Endothelial cell of umbilical vein (primary cell): ENCODE measurements at regions of chr17 and their contacts with region 1.

Region 1: GRCh38 chr17:81094509-81095382 is 59.8 kb downstream of the BAIAP2 start:
- DNase-seq: peak; percentile 78
- H3K4me3 ChIP-seq: no peak overlapping the region
- H3K27ac ChIP-seq: no peak overlapping the region
- H3K4me1 ChIP-seq: peaks cover 8% of the 10 kb centered on the region
- H3K27me3 ChIP-seq: no peaks in the 10 kb centered on the region
- CTCF ChIP-seq: no peak
- POLR2A ChIP-seq: no peak

Region 2: GRCh38 chr17:80986816-80987475 is 107.8 kb before region 1 on chr17:
- CTCF ChIA-PET with region 1: interaction called, 44 read pairs
- POLR2A ChIA-PET with region 1: no interaction called
- dilution Hi-C with region 1: no loop called
- intact Hi-C with region 1: loop called (anchors 1 kb)
- DNase-seq: no peak
- H3K4me3 ChIP-seq: no peak overlapping the region
- H3K27ac ChIP-seq: no peak overlapping the region
- H3K4me1 ChIP-seq: no peaks in the 10 kb centered on the region
- H3K27me3 ChIP-seq: no peaks in the 10 kb centered on the region
- CTCF ChIP-seq: no peak
- POLR2A ChIP-seq: no peak

Region 3: GRCh38 chr17:81018044-81018802 is 76.5 kb before region 1 on chr17:
- CTCF ChIA-PET with region 1: interaction called, 59 read pairs
- POLR2A ChIA-PET with region 1: no interaction called
- dilution Hi-C with region 1: no loop called
- intact Hi-C with region 1: loop called (anchors 1 kb)
- DNase-seq: peak; percentile 65
- H3K4me3 ChIP-seq: peak overlapping the region in 2 of 3 experiments; percentile 28 to 51
- H3K27ac ChIP-seq: peak overlapping the region; percentile 29
- H3K4me1 ChIP-seq: peaks cover 12% of the 10 kb centered on the region
- H3K27me3 ChIP-seq: no peaks in the 10 kb centered on the region
- CTCF ChIP-seq: no peak
- POLR2A ChIP-seq: peak; percentile 50

Region 4: DNA sequence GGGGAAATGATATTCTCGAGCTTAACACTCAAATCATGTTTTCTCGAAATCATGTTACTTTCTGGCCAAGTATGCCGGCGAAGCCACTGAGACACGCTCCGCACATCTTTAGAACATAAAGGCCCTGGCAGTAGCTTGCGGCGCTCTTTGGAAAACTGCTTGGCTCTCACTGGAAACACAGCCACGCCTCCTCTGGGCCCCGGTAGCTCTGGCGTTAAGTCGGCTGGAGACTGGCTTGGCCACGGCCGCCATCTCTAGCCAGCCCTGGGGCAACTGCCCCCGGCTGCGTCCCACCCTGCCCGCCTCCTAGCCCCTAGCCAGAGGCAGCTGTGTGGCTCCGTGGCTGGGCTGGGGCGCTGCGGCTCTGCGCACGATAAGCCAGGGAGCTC is 69.0 kb before region 1 on chr17:
- CTCF ChIA-PET with region 1: interaction called, 59 read pairs
- POLR2A ChIA-PET with region 1: no interaction called
- dilution Hi-C with region 1: no loop called
- intact Hi-C with region 1: loop called (anchors 1 kb)
- DNase-seq: no peak
- H3K4me3 ChIP-seq: no peak overlapping the region
- H3K27ac ChIP-seq: no peak overlapping the region
- H3K4me1 ChIP-seq: peaks cover 3% of the 10 kb centered on the region
- H3K27me3 ChIP-seq: peaks cover 0 to 2% of the 10 kb centered on the region in 2 experiments
- CTCF ChIP-seq: no peak
- POLR2A ChIP-seq: no peak